B cell (primary cell): ENCODE measurements at regions of chr3 and their contacts with region 1.

Region 1: GRCh38 chr3:9809615-9810432 is at the start of gene TTLL3:
- DNase-seq: peak; percentile 73
- ATAC-seq: peak; percentile 68
- H3K4me3 ChIP-seq: peak within 1 kb of the TSS; percentile 32 to 79 (median 69)
- H3K4me3 Mint-ChIP-seq: peak within 1 kb of the TSS; percentile 96
- H3K27ac ChIP-seq: peak within 1 kb of the TSS; percentile 84 to 90
- H3K27ac Mint-ChIP-seq: peak within 1 kb of the TSS; percentile 99
- H3K4me1 ChIP-seq: peaks cover 24 to 30% of the 10 kb centered on the region in 2 donors
- H3K4me1 Mint-ChIP-seq: peaks cover 38% of the 10 kb centered on the region
- H3K27me3 ChIP-seq: no peaks in the 10 kb centered on the region
- H3K27me3 Mint-ChIP-seq: no peaks in the 10 kb centered on the region
- CTCF ChIP-seq: no peak
- total RNA-seq, gene TTLL3: 84.5 and 84.6 TPM in 2 replicates

Region 2: DNA sequence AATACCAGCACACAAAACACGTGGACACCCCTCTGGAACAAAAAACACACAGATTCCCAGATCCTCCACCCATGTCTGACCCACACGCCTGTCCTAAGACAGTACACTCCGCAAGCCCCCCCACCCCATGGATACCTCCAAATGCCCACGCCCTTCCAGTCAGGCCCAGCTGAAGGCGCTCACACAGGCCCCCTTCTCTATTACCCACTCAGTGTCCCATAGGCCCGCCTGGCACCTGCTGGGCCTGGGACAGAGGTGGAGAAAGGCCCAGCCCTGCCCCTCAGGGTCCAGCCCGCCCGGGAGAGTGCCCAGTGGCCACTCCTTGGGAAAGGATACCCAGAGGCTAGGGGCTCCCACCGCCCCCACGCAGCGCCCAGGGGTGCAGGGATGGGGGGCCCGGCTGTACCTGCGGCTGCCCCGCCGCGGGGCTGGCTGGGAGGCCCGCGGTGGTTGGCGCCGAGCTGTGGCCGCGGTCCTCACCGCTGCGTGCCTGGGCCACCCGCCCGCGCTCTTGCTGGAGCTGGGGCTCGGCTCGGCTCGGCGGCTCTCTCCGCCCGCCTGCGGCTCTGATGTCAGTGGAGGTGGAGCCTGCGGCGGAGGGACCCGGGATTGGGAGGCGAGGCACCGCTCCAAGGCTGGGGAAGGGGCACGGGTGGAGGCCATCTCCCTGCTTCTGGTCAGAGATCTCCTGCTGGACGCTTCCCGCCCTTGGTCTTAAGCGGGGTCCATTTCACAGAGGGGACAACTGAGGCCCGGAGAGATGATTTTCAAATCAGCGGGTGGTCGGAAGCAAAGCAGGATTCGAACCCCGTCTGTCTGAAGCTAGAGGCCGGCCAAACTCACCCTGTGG is 40.2 kb before region 1 on chr3 and contains the start of gene CAMK1:
- CTCF ChIA-PET with region 1: no interaction called
- POLR2A ChIA-PET with region 1: no interaction called
- intact Hi-C with region 1: loop called (anchors 1 kb)
- DNase-seq: peak; percentile 49
- ATAC-seq: peak; percentile 81
- H3K4me3 ChIP-seq: peak within 1 kb of the TSS; percentile 38 to 63 (median 39)
- H3K4me3 Mint-ChIP-seq: peak within 1 kb of the TSS; percentile 67
- H3K27ac ChIP-seq: no peak within 1 kb of the TSS
- H3K27ac Mint-ChIP-seq: no peak within 1 kb of the TSS
- H3K4me1 ChIP-seq: peaks cover 17 to 18% of the 10 kb centered on the region in 2 donors
- H3K4me1 Mint-ChIP-seq: peaks cover 21% of the 10 kb centered on the region
- H3K27me3 ChIP-seq: peaks cover 0 to 12% (median 2%) of the 10 kb centered on the region in 4 experiments
- H3K27me3 Mint-ChIP-seq: peaks cover 5% of the 10 kb centered on the region
- CTCF ChIP-seq: no peak
- total RNA-seq, gene CAMK1: 0.57 and 1.1 TPM in 2 replicates

Region 3: DNA sequence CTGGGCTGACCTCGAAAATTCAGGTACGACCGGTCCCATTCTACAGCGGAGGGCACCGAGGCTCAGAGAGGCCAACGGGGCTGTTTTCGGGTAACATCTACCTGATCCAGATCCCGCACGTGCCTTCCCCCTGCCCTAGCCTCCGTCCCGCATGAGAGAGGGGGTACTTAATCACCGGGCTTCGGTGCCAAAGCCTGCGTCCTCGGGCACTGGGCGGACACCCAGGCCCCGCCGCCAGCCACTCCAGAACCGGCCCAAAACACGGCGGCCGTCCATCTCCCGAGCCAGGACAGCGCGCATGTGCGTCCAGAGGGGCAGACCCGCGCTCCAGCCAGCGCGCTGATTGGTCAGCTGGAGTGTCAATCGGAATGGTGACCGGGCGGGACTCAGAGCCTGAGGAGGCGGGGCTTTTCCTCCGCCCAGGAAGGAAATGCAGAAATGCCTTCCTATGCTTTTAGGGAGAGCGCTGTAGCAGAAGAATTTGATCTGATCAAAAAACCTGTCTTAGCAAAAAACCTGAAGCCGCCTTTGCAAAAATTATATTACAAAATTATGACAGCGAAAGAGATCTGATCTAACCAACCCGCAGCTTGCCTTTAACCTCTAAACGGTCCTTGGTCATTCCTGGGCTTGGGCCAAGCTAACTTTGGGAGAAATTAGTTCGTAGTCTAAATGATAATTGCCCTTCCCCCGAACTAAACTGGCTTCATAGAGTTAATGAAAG is 34.1 kb after region 1 on chr3 and contains the start of gene RPUSD3:
- CTCF ChIA-PET with region 1: no interaction called
- POLR2A ChIA-PET with region 1: no interaction called
- intact Hi-C with region 1: loop called (anchors 1 kb)
- DNase-seq: peak; percentile 97
- ATAC-seq: peak; percentile 100
- H3K4me3 ChIP-seq: peak within 1 kb of the TSS; percentile 60 to 96 (median 73)
- H3K4me3 Mint-ChIP-seq: peak within 1 kb of the TSS; percentile 98
- H3K27ac ChIP-seq: peak within 1 kb of the TSS; percentile 17 to 75
- H3K27ac Mint-ChIP-seq: peak within 1 kb of the TSS; percentile 92
- H3K4me1 ChIP-seq: peaks cover 8 to 17% of the 10 kb centered on the region in 2 donors
- H3K4me1 Mint-ChIP-seq: peaks cover 20% of the 10 kb centered on the region
- H3K27me3 ChIP-seq: no peaks in the 10 kb centered on the region
- H3K27me3 Mint-ChIP-seq: no peaks in the 10 kb centered on the region
- CTCF ChIP-seq: no peak
- total RNA-seq, gene RPUSD3: 60.7 and 62.1 TPM in 2 replicates